GM10248 (cell line): ENCODE measurements at regions of chr1 and their contacts with region 1.

Region 1: DNA sequence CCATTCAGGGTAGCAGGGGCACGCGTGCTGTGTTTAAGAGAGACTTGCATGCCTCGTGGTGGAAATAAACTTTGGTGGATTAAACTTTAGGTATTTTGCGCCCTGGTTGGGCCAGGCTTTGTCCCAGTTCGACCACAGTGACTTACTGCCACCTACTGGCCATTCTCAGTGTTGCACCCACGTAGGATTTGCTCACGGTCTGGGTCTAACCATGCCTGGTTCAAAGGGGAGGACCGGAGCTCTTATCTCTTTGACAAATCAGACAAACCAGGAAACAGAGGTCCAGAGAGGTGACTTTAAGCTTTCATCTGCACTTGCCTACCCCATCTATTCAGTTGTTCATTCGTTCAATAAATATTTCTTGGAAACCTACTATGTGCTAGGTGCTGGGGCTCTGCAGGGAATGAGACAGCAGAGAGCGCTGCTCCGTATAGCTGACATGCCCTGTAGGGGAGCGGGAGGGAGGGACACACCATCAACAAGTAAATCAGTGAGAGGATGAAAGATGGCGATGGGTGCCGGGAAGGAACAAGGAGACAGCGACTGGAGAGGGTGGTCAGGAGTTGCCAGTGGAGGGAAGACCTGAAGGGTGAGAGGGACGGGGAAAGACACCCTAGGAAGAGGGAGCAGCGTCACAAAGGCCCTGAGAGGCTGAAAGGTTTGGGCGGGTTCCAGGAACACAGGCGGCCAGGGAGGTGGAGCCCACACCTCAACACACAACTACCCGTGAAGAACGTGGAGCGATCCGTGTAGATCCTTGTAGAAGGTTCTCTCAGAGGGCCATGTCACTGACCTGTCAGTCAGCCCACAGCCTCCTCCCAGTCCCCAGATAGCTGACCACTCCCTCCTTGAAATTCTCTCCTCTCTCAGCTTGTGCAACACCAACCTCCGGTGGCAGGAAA is 27.2 kb upstream of the TINAGL1 start:
- DNase-seq: peak; percentile 87
- CTCF ChIP-seq: peak; percentile 89

Region 2: GRCh38 chr1:31182352-31182751 is 366.8 kb before region 1 on chr1:
- CTCF ChIA-PET with region 1: interaction called, 21 read pairs
- POLR2A ChIA-PET with region 1: no interaction called
- DNase-seq: peak; percentile 79
- CTCF ChIP-seq: no peak

Region 3: GRCh38 chr1:31531177-31531999 is 17.8 kb before region 1 on chr1:
- CTCF ChIA-PET with region 1: interaction called, 21 read pairs
- POLR2A ChIA-PET with region 1: no interaction called
- DNase-seq: no peak
- CTCF ChIP-seq: no peak

Region 4: DNA sequence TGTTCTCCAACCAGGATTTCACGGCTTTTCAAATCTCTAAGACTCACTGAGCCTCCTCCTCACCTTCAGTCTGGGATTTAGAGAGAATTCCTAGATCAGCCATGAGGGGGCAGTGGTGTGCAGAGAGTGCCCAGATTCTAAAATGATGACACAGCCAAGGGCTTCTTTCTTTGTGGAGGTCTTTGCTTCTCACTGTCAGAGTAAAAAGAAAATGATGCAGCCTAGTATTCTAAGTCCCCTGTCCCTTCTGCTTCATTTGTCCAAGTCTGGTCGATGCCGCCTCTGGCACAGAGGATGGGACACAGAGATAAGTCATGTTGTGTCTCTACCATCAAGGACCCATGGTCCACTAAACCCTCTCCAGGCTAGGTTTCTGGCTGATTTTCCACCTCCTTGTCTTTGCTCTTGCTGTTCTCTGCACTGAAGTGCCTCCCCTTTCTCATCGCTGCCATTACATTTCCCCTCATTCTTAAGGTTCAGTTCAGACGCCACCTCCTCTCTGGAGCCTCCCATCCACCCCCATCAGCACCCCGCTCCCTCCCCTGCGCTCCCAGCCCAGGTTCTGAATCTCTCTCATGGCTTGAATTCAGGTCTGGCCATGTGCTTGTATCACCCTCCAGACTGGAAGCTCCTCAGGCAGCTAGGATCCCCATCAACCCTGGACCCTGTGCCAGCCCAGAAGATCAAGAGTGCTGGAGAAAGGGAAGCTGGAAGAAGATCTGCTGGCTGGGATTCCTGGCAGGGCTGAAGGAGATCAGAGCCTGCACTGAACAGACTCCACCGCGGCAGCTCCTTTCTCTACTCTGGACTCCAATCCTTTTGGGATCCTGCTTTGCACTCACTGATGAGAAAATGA is 15.2 kb after region 1 on chr1:
- CTCF ChIA-PET with region 1: interaction called, 33 read pairs
- POLR2A ChIA-PET with region 1: no interaction called
- DNase-seq: peak; percentile 78
- CTCF ChIP-seq: peak; percentile 79